Left cardiac atrium (tissue), 4 donors: ENCODE measurements at regions of chr18 and their contacts with region 1.

Region 1: GRCh38 chr18:59823596-59824195 is 76.1 kb upstream of the PMAIP1 start:
- DNase-seq: peak; percentile 58
- ATAC-seq: peak; percentile 83 to 87

Region 2: GRCh38 chr18:59308248-59308937 is 515.3 kb before region 1 on chr18:
- intact Hi-C with region 1: loop called in 1 of 2 experiments (anchors 10 kb)
- DNase-seq: peak; percentile 83
- ATAC-seq: peak; percentile 97 to 98

Region 3: GRCh38 chr18:59459369-59460079 is 364.2 kb before region 1 on chr18:
- intact Hi-C with region 1: loop called (anchors 1 to 5 kb)
- DNase-seq: no peak
- ATAC-seq: peak; percentile 35 to 64

Region 4: GRCh38 chr18:59631583-59632181 is 192.0 kb before region 1 on chr18:
- intact Hi-C with region 1: loop called in 1 of 2 experiments (anchors 2 kb)
- DNase-seq: no peak
- ATAC-seq: no peak

Region 5: GRCh38 chr18:59957971-59958595 is 134.4 kb after region 1 on chr18:
- intact Hi-C with region 1: no loop called
- DNase-seq: peak; percentile 43
- ATAC-seq: peak in 1 of 2 donors; percentile 53